A673 (cell line): ENCODE measurements at regions of chr1 and their contacts with region 1.

Region 1: DNA sequence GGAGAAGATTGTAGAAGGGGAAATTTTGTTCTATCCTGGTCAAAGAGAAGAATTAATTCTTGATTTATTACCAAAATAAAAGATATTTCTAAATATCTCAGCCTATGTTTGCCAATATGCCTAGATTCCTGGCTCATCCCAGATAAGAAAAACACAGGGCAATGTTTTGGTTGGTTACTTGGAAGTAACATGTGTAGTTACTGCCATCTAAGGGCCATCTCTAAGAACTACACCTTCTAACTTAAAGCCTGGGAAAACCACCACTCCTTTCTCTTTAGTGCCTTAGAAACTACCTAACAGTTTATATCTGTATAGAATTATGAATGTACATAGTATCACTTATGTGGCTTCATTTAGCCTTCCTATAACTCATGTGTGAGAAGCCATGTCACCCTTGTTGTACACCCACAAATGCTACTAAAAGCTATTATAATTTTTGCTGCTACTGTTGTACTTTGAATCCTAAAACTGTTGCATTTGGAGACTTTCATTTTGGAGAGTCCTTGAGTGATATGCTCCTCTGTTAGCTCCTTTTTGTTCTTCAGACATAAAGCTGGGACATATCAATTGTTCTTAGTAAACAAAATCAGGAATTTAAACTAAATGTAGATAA is 4.5 kb downstream of the AIM2 start:
- DNase-seq: peak; percentile 72
- H3K4me3 ChIP-seq: no peak overlapping the region
- H3K27ac ChIP-seq: no peak overlapping the region
- H3K4me1 ChIP-seq: no peaks in the 10 kb centered on the region
- H3K27me3 ChIP-seq: peaks cover 8% of the 10 kb centered on the region
- CTCF ChIP-seq: peak; percentile 77

Region 2: DNA sequence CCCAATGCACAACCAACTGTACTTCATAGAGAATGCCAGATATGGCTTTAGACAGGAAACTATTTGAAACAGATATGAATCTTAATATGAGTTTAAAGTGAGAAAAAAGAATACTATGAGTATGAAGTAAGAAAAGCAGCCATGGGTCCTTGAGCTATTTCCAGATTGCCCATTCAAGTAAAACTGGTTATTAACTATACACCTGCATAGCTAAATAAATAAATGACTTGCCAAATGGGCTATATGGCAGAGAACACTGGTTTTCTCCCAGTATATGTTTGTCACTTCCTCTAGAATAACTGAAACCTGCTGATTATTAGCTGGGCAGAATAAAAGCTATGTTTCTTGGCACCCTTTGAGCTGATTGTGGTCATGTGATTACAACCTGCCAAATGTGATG is 799.4 kb before region 1 on chr1:
- CTCF ChIA-PET with region 1: no interaction called
- POLR2A ChIA-PET with region 1: no interaction called
- intact Hi-C with region 1: no loop called
- DNase-seq: no peak
- H3K4me3 ChIP-seq: no peak overlapping the region
- H3K27ac ChIP-seq: no peak overlapping the region
- H3K4me1 ChIP-seq: no peaks in the 10 kb centered on the region
- H3K27me3 ChIP-seq: no peaks in the 10 kb centered on the region
- CTCF ChIP-seq: no peak

Region 3: GRCh38 chr1:158506369-158506987 is 565.6 kb before region 1 on chr1:
- CTCF ChIA-PET with region 1: no interaction called
- POLR2A ChIA-PET with region 1: no interaction called
- intact Hi-C with region 1: loop called (anchors 1 kb)
- DNase-seq: peak; percentile 65
- H3K4me3 ChIP-seq: no peak overlapping the region
- H3K27ac ChIP-seq: no peak overlapping the region
- H3K4me1 ChIP-seq: no peaks in the 10 kb centered on the region
- H3K27me3 ChIP-seq: peaks cover 18% of the 10 kb centered on the region
- CTCF ChIP-seq: peak; percentile 78

Region 4: DNA sequence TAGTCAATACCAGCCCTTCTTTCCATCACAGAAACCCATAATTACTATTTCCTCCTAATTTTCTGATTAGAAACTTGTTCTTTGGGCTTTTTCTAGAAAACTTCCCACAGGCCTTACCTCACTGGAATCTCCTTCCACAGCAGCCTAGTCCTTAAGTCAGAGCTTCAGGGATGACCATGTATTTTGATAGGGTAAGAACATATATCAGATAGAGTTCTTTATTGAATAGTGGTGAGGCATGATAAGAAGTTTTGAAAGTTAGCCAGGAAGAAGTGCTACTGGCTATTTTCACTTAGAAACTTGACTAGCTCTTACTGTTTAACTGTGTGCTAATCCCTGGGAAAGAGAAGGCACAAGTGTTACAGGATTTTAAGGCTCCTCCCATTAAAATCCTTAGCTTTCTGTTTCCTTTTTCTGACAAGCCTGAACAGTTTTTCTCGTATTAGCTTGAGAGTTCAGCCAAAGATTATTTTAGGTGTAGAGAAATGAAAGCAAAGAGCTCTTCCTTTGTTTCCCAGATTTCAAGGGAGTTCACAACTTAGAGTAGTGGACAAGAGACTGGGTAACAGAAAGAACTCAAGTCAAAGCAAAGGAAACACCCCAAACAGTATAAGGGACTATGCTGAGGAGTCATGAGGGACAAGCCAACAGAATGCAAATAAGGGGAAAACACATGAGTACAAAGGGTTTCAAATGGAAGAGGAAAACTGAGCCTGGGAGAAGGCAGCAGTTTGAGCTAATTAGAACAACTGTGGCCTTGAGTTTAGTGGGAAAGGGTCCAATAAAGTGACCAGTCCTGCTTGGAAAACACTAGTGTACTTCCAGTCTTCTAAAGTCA is 41.7 kb after region 1 on chr1:
- CTCF ChIA-PET with region 1: no interaction called
- POLR2A ChIA-PET with region 1: no interaction called
- intact Hi-C with region 1: no loop called
- DNase-seq: no peak
- H3K4me3 ChIP-seq: no peak overlapping the region
- H3K27ac ChIP-seq: no peak overlapping the region
- H3K4me1 ChIP-seq: no peaks in the 10 kb centered on the region
- H3K27me3 ChIP-seq: peaks cover 26% of the 10 kb centered on the region
- CTCF ChIP-seq: no peak

Region 5: DNA sequence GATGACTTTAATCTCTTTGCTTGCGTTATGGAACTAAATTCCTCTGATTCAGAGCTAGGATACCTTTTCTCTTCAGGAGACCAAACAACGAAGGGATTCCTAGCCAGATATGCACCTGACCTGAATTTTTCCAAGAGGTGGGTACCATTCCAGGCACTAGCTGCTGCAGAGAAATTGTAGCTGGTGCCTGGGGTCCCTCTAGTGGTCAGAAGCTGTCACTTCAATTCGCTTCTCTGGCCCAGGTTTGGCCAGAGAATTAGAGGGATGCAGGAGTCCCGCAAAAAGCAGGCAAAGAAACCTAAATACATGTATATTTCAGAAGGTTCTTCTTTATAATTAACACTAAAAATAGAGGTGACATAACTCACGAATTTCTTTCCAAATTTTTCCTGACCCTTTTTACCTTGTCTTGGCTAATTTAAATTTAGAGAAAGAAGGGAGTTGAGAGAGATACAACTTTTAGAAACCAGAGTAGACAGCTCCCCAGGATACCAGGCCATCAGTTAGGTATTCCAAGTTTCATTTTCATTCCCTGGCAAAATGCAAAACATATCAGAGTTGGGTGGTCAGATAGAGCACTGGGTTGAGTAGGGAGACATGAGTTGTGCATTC is 142.2 kb after region 1 on chr1:
- CTCF ChIA-PET with region 1: no interaction called
- POLR2A ChIA-PET with region 1: no interaction called
- intact Hi-C with region 1: no loop called
- DNase-seq: peak; percentile 49
- H3K4me3 ChIP-seq: no peak overlapping the region
- H3K27ac ChIP-seq: no peak overlapping the region
- H3K4me1 ChIP-seq: no peaks in the 10 kb centered on the region
- H3K27me3 ChIP-seq: peaks cover 51% of the 10 kb centered on the region
- CTCF ChIP-seq: peak; percentile 88

Region 6: DNA sequence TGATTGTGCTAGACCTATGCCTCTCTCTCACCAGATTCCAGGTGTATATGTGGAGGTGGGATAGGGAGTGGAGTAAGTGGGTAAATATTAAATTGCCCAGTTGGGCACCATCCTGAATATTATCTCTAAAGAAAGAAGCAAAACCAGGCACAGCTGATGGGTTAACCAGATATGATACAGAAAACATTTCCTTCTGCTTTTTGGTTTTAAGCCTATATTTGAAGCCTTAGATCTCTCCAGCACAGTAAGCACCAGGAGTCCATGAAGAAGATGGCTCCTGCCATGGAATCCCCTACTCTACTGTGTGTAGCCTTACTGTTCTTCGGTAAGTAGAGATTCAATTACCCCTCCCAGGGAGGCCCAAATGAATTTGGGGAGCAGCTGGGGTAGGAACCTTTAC is 230.0 kb after region 1 on chr1 and contains the start of gene FCER1A:
- CTCF ChIA-PET with region 1: no interaction called
- POLR2A ChIA-PET with region 1: no interaction called
- intact Hi-C with region 1: no loop called
- DNase-seq: no peak
- H3K4me3 ChIP-seq: no peak within 1 kb of the TSS
- H3K27ac ChIP-seq: no peak within 1 kb of the TSS
- H3K4me1 ChIP-seq: no peaks in the 10 kb centered on the region
- H3K27me3 ChIP-seq: peaks cover 34% of the 10 kb centered on the region
- CTCF ChIP-seq: no peak
- total RNA-seq, gene FCER1A: not detected in 2 replicates